PC-9 (cell line): ENCODE measurements at regions of chr6 and their contacts with region 1.

Region 1: GRCh38 chr6:93849857-93850256 is 430.5 kb upstream of the EPHA7 start:
- DNase-seq: no peak
- H3K4me3 ChIP-seq: no peak overlapping the region
- H3K27ac ChIP-seq: no peak overlapping the region
- H3K4me1 ChIP-seq: no peaks in the 10 kb centered on the region
- H3K27me3 ChIP-seq: no peaks in the 10 kb centered on the region
- CTCF ChIP-seq: no peak

Region 2: GRCh38 chr6:94254689-94255088 is 404.8 kb after region 1 on chr6:
- CTCF ChIA-PET with region 1: no interaction called
- POLR2A ChIA-PET with region 1: no interaction called
- intact Hi-C with region 1: loop called (anchors 5 kb)
- DNase-seq: peak in 1 of 2 experiments; percentile 2
- H3K4me3 ChIP-seq: no peak overlapping the region
- H3K27ac ChIP-seq: no peak overlapping the region
- H3K4me1 ChIP-seq: no peaks in the 10 kb centered on the region
- H3K27me3 ChIP-seq: no peaks in the 10 kb centered on the region
- CTCF ChIP-seq: peak; percentile 48; the same call in 1 of the 2 replicates

Region 3: GRCh38 chr6:94300424-94301144 is 450.7 kb after region 1 on chr6:
- CTCF ChIA-PET with region 1: no interaction called
- POLR2A ChIA-PET with region 1: no interaction called
- intact Hi-C with region 1: no loop called
- DNase-seq: no peak
- H3K4me3 ChIP-seq: no peak overlapping the region
- H3K27ac ChIP-seq: no peak overlapping the region
- H3K4me1 ChIP-seq: no peaks in the 10 kb centered on the region
- H3K27me3 ChIP-seq: no peaks in the 10 kb centered on the region
- CTCF ChIP-seq: no peak